Transverse colon (tissue), 4 donors: ENCODE measurements at regions of chr7 and their contacts with region 1.

Region 1: GRCh38 chr7:74561898-74562613 is 95.5 kb upstream of the GTF2I start:
- DNase-seq: no peak
- H3K4me3 ChIP-seq: no peak overlapping the region
- H3K27ac ChIP-seq: no peak overlapping the region
- H3K4me1 ChIP-seq: no peaks in the 10 kb centered on the region
- H3K27me3 ChIP-seq: no peaks in the 10 kb centered on the region
- CTCF ChIP-seq: no peak
- EP300 ChIP-seq: no peak
- POLR2A ChIP-seq: no peak

Region 2: DNA sequence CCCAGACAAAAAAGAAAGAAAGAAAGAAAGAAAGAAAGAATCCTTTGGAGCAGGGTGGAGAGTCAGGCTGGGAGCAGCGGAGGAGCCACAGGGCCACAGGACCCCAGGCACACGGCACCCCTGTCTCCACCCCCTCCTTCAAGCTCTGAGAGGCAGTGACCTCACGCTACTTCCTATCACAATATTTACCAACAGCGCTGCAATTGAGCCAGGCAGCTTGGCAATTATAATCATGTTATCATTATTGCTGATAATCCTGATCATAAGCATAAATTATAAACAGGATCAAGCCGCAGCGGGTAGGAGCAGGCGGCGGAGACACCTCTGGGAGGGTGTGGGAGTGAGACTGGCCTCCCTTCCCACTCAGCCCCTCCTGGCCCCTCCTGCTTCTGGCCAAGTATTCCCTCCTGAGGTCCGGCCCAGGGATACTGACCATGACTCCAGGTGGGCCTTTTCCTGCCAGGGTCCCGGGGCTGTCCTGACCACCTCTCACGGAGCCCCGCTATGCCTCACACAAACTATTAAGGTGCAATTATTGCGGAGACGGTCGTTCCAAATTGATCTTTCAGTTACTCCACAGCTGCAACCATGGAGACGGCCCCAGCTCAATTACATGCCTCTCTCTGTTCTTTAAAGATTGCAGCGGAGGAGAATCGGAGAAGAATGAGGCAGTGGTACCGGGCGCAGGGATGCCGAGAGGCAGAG is 118.4 kb before region 1 on chr7:
- in situ Hi-C with region 1: loop called in 1 of 4 experiments (anchors 25 kb)
- intact Hi-C with region 1: loop called (anchors 2 kb)
- DNase-seq: no peak
- H3K4me3 ChIP-seq: no peak overlapping the region
- H3K27ac ChIP-seq: no peak overlapping the region
- H3K4me1 ChIP-seq: no peaks in the 10 kb centered on the region
- H3K27me3 ChIP-seq: no peaks in the 10 kb centered on the region
- CTCF ChIP-seq: no peak
- EP300 ChIP-seq: no peak
- POLR2A ChIP-seq: no peak

Region 3: GRCh38 chr7:76393116-76394031 is 1831.3 kb after region 1 on chr7:
- in situ Hi-C with region 1: no loop called
- intact Hi-C with region 1: no loop called
- DNase-seq: peak; percentile 97
- H3K4me3 ChIP-seq: peak overlapping the region; percentile 44 to 76 (median 58)
- H3K27ac ChIP-seq: peak overlapping the region; percentile 87 to 93 (median 92)
- H3K4me1 ChIP-seq: peaks cover 12 to 36% (median 25%) of the 10 kb centered on the region in 4 donors
- H3K27me3 ChIP-seq: no peaks in the 10 kb centered on the region
- CTCF ChIP-seq: peak in 1 of 5 experiments; percentile 5
- EP300 ChIP-seq: no peak
- POLR2A ChIP-seq: peak; percentile 81